Prostate gland (tissue), 2 donors: ENCODE measurements at regions of chr2 and their contacts with region 1.

Region 1: GRCh38 chr2:63226297-63226696 is 175.7 kb downstream of the OTX1 start:
- DNase-seq: no peak
- H3K4me3 ChIP-seq: no peak overlapping the region
- H3K27ac ChIP-seq: no peak overlapping the region
- H3K4me1 ChIP-seq: no peaks in the 10 kb centered on the region
- H3K27me3 ChIP-seq: no peaks in the 10 kb centered on the region
- CTCF ChIP-seq: no peak
- POLR2A ChIP-seq: no peak

Region 2: GRCh38 chr2:63444565-63445295 is 218.4 kb after region 1 on chr2:
- intact Hi-C with region 1: loop called (anchors 5 kb)
- DNase-seq: no peak
- H3K4me3 ChIP-seq: no peak overlapping the region
- H3K27ac ChIP-seq: no peak overlapping the region
- H3K4me1 ChIP-seq: no peaks in the 10 kb centered on the region
- H3K27me3 ChIP-seq: no peaks in the 10 kb centered on the region
- CTCF ChIP-seq: no peak
- POLR2A ChIP-seq: no peak